ENCODE measurements at regions of chr7 and their contacts with region 1.

Region 1: GRCh38 chr7:73578342-73579127 is at the start of gene TBL2:
- DNase-seq: peak; percentile 99
- H3K4me3 ChIP-seq: peak within 1 kb of the TSS; percentile 74 to 95 (median 87)
- H3K27ac ChIP-seq: peak within 1 kb of the TSS; percentile 72
- H3K4me1 ChIP-seq: peaks cover 20% of the 10 kb centered on the region
- H3K27me3 ChIP-seq: no peaks in the 10 kb centered on the region
- CTCF ChIP-seq: peak in 1 of 2 donors; percentile 25
- POLR2A ChIP-seq: peak; percentile 97
- total RNA-seq, gene TBL2: 34.8 and 38.6 TPM in 2 replicates

Region 2: GRCh38 chr7:73557108-73557396 is 21.5 kb before region 1 on chr7:
- CTCF ChIA-PET with region 1: interaction called, 5 read pairs
- POLR2A ChIA-PET with region 1: interaction called, 4 read pairs
- dilution Hi-C with region 1: no loop called
- intact Hi-C with region 1: loop called (anchors 1 kb)
- DNase-seq: peak; percentile 96
- H3K4me3 ChIP-seq: peak overlapping the region; percentile 69 to 90 (median 82)
- H3K27ac ChIP-seq: peak overlapping the region; percentile 99
- H3K4me1 ChIP-seq: peaks cover 18% of the 10 kb centered on the region
- H3K27me3 ChIP-seq: no peaks in the 10 kb centered on the region
- CTCF ChIP-seq: no peak
- POLR2A ChIP-seq: no peak

Measured in endothelial cell of umbilical vein (primary cell).